ENCODE measurements at regions of chr1 and their contacts with region 1.

Region 1: DNA sequence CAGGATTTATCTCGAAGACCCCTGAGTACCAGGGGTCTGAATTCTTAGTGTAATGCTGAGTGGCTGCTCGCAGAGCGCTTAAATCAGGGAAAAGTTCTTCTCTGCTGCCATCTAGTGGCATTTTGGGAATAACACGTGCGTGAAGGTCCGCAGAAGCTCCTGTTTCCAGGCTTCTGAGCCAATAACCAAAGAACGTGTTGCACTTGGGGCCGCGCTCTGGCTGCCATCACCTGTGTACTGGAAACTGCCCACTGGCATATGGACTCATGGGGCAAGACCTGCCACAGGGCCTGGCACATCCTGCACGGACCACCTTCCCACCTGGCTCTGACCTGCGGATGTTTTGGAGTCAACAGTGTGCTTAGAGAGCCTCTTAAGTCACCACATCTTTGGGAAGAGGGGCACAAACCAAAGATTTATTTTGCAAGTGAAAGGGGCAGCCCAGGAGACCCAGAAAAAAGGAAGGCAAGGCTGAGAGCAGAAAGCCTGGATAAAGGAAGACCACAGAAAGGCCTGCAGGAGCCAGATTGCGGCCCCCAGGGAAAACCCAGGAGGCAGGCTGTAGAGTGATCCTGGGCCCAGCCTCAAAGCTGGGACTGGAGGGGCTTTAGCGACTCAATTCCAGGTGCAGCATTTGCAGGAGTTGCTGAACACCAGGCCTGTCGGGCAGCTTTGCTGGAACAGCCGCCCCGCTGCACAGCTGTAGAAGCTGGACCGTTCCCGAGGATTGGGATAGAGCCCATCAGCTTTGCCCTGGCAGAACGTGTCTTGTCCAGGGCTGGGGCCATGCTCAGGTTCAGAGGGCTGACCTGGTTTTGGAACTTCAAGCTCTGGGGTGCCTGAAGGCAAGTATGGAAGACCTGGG is 13.0 kb downstream of the CHIT1 start:
- DNase-seq: peak; percentile 25 to 54 (median 38)
- H3K4me3 ChIP-seq: no peak overlapping the region
- H3K4me3 Mint-ChIP-seq: no peak overlapping the region
- H3K27ac ChIP-seq: no peak overlapping the region
- H3K27ac Mint-ChIP-seq: no peak overlapping the region
- H3K4me1 ChIP-seq: no peaks in the 10 kb centered on the region
- H3K4me1 Mint-ChIP-seq: peaks cover 0 to 7% (median 6%) of the 10 kb centered on the region in 3 donors
- H3K27me3 ChIP-seq: no peaks in the 10 kb centered on the region
- H3K27me3 Mint-ChIP-seq: peaks cover 17 to 26% of the 10 kb centered on the region in 2 donors

Region 2: GRCh38 chr1:203038891-203039608 is 177.5 kb before region 1 on chr1:
- CTCF ChIA-PET with region 1: interaction called, 57 read pairs
- POLR2A ChIA-PET with region 1: no interaction called
- DNase-seq: peak; percentile 15 to 73 (median 45)
- H3K4me3 ChIP-seq: no peak overlapping the region
- H3K4me3 Mint-ChIP-seq: no peak overlapping the region
- H3K27ac ChIP-seq: no peak overlapping the region
- H3K27ac Mint-ChIP-seq: no peak overlapping the region
- H3K4me1 ChIP-seq: no peaks in the 10 kb centered on the region
- H3K4me1 Mint-ChIP-seq: peaks cover 1 to 5% (median 5%) of the 10 kb centered on the region in 3 donors
- H3K27me3 ChIP-seq: no peaks in the 10 kb centered on the region
- H3K27me3 Mint-ChIP-seq: peaks cover 4 to 12% of the 10 kb centered on the region in 2 donors

Region 3: GRCh38 chr1:203202431-203203245 is 13.9 kb before region 1 on chr1:
- CTCF ChIA-PET with region 1: interaction called, 28 read pairs
- POLR2A ChIA-PET with region 1: no interaction called
- DNase-seq: no peak
- H3K4me3 ChIP-seq: no peak overlapping the region
- H3K4me3 Mint-ChIP-seq: no peak overlapping the region
- H3K27ac ChIP-seq: no peak overlapping the region
- H3K27ac Mint-ChIP-seq: no peak overlapping the region
- H3K4me1 ChIP-seq: no peaks in the 10 kb centered on the region
- H3K4me1 Mint-ChIP-seq: no peaks in the 10 kb centered on the region
- H3K27me3 ChIP-seq: no peaks in the 10 kb centered on the region
- H3K27me3 Mint-ChIP-seq: peaks cover 9 to 38% of the 10 kb centered on the region in 2 donors

Region 4: DNA sequence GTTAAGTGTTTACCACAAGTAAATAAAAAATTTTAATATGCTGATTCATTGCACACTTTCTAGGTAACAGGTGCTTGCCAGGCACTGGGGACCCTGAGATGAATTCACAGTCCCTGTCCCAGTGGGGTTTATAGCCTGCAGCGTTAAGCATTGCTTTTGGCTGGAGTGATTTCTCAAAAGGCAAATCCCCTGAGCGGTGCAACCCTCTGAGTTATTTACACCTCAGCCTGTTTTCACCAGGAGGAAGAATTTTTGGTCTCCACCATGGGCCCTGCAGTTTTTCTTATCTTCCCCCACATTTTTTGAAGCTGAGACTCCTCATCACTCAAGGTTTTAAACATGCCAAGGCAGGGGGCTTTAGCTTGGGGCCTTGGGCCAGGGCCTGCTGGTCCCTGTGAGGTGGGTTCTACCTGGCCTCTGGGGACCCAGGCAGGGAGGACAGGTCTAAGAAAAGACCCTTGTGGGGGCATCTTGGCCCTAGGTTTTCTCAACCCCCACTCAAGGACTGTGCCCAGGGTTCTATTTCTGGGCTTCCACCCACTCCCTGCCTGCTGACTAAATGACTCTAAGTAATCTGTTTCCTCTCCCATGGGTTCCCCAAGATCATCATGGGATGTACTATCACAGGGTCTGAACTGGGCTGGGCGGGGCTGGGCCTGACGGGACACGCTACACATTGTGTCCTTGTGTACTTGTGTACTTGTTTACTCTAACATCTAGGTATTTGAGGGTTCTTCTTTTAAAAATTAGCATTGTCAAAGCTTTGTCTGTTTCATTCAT is 23.2 kb after region 1 on chr1:
- CTCF ChIA-PET with region 1: no interaction called
- POLR2A ChIA-PET with region 1: no interaction called
- DNase-seq: no peak
- H3K4me3 ChIP-seq: no peak overlapping the region
- H3K4me3 Mint-ChIP-seq: no peak overlapping the region
- H3K27ac ChIP-seq: no peak overlapping the region
- H3K27ac Mint-ChIP-seq: no peak overlapping the region
- H3K4me1 ChIP-seq: no peaks in the 10 kb centered on the region
- H3K4me1 Mint-ChIP-seq: no peaks in the 10 kb centered on the region
- H3K27me3 ChIP-seq: peaks cover 7% of the 10 kb centered on the region
- H3K27me3 Mint-ChIP-seq: peaks cover 27 to 60% of the 10 kb centered on the region in 2 donors